Sciatic nerve (tissue), 2 donors: ENCODE measurements at regions of chr7 and their contacts with region 1.

Region 1: GRCh38 chr7:136000288-136000913 is 23.2 kb upstream of the MTPN start:
- DNase-seq: no peak
- ATAC-seq: no peak

Region 2: DNA sequence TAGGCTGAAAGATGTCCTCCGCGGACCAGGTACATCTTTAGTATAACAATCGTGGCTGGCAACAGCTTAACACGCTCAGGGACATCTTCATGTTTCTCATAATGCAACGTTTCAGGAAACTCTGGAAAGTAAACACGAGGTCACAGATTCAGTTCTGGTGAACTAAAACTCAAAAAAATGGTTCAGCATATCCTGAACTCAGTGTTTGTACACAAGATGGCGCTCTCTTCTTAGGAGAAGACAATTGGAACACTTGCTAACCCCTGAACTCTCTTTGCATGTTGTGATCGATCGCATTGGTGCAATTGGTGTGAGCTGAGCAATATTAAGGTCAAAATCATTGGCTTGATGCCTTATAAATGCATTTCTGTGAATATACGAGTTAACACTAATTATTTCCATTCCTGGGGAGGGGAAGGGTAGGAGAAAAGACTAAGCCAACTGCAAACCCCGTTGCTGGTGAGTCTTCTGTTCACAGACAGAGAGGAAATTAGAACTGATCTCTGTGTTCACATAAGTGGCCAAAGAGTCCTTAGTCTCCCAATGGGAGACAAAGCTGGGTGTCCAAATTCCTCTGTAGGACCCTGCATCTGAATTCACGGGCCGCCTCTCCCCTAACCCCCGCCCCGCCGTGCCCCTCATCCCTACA is 199.2 kb before region 1 on chr7:
- intact Hi-C with region 1: loop called (anchors 5 kb)
- DNase-seq: no peak
- ATAC-seq: peak; percentile 63

Region 3: GRCh38 chr7:136062625-136063325 is 62.4 kb after region 1 on chr7:
- intact Hi-C with region 1: no loop called
- DNase-seq: no peak
- ATAC-seq: no peak

Region 4: DNA sequence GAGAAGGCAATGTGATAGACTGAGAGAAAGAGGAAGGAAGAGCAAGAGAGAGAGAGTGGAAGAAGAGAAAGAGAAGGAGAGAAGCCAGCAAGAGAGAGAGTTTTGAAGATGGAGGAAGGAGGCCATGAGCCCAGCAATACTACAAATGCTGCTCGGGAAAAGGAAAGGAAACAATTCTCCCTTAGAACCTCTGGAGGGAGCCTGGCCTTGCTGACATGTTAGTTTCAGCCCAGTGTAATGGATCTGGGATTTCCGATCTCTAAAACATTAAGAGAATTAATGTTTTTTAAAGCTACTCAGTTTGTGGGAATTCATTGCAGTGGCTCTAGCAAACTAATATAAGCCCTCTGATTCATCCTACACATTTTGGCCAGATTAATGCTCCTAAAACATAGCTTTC is 183.6 kb after region 1 on chr7:
- intact Hi-C with region 1: no loop called
- DNase-seq: no peak
- ATAC-seq: no peak